ENCODE measurements at regions of chr19 and their contacts with region 1.

Region 1: DNA sequence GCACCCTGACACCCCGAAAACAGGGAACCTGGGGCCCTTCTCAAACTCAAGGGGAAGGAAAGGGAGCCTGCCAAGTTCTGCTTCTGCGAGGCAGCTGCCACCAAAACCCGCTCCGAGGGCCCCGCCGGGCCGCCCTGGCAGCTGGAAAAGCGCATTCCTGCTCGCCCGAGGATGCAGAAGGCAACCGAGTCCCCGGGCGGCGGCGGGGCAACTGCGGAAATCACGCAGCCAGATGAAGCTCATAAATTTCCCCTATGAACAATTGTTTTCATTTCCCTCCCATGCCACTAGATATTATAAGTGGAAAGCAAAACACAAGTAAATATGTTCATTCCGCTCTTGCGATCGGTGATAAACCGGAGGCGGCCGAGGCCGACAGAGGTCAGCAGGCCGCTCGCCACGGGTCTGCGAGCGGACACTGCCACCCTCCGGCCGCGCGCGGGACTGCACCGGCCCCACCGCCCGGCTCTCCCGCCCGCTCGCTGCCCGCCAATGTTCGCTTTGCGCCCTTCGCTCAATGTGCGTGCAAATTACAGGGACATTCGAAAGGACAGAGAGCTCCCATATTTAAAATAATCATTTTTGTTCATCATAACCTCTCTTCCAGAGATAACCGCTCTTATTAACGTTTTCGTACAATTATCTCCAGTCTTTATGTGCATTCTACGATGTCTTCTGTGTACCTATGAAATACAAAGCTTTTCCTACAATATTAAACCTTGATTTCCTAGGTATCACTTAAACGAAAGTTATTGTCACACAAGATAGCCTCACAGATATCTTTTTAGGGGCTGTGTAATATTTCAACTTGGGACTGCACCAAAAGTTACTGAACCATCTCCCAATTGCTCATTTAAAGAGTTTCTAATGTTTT is 120.8 kb upstream of the ZNF507 start:
- DNase-seq: peak; percentile 88

Region 2: DNA sequence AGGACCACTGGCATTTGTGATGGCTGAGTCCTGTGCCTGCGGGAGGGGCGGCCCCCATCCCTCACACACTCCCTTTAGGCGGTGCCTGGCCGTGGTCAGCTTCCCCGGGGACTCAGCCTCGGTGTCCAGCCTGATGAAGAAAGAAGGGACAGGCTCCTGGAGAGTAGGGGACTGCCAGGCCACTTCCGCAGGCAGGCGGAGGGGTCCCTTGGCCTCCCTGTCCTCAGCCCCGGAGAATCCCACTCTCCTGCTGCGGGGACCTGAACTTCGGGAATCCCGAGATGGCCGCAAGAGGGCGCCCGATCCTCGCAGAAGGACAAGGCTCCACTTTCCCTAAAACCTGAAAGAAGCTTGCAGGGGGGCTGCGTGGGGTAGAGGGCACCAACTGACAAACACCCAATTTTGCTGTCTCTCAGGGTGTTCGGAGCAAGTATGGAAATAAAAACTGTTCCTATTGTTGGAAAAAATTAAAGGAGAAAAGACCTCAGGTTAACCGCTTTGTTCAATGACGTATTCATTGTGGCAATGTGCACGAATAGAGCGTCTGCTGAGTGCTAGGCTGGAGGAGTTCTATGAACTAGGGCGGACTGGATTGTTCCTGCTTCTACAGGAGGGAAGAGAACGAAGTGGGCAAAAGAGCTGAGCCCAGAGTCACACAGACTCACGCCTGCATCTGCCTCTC is 1555.1 kb before region 1 on chr19:
- intact Hi-C with region 1: loop called (anchors 5 to 10 kb)
- DNase-seq: peak; percentile 90

Region 3: GRCh38 chr19:32287811-32288227 is 63.2 kb after region 1 on chr19:
- intact Hi-C with region 1: loop called in 1 of 2 experiments (anchors 2 kb)
- DNase-seq: peak; percentile 90

Measured in posterior vena cava (tissue), 2 donors.